Activated CD8-positive, alpha-beta T cell treated with anti-CD3 and anti-CD28 coated beads for 36 hours (primary cell): ENCODE measurements at regions of chr17 and their contacts with region 1.

Region 1: GRCh38 chr17:69567130-69567529 is 152.6 kb downstream of the MAP2K6 start:
- DNase-seq: no peak
- ATAC-seq: no peak
- H3K4me3 Mint-ChIP-seq: no peak overlapping the region
- H3K27ac Mint-ChIP-seq: no peak overlapping the region
- H3K4me1 Mint-ChIP-seq: no peaks in the 10 kb centered on the region
- H3K27me3 Mint-ChIP-seq: peaks cover 1% of the 10 kb centered on the region
- CTCF ChIP-seq: no peak

Region 2: DNA sequence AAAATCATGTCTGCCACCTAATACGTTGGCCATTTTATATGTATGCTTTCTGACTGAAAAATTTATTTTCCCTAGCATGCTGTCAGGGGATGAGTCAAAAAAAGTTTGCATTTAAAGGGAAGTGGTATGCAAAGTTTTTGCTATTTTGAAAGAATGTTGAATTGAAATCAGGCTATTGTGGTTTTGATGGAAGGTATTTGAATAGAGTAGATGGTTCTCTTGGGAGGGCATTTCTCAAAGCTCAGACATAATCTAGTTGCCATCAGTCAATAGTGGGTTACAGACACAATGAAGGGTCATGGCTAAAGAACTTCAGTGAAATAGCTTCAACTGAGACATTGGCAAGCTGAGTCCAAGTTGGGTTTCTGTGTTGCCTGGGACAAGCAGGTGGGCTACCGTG is 50.2 kb before region 1 on chr17:
- CTCF ChIA-PET with region 1: no interaction called
- POLR2A ChIA-PET with region 1: no interaction called
- intact Hi-C with region 1: no loop called
- DNase-seq: no peak
- ATAC-seq: no peak
- H3K4me3 Mint-ChIP-seq: no peak overlapping the region
- H3K27ac Mint-ChIP-seq: no peak overlapping the region
- H3K4me1 Mint-ChIP-seq: peaks cover 4% of the 10 kb centered on the region
- H3K27me3 Mint-ChIP-seq: no peaks in the 10 kb centered on the region
- CTCF ChIP-seq: no peak

Region 3: DNA sequence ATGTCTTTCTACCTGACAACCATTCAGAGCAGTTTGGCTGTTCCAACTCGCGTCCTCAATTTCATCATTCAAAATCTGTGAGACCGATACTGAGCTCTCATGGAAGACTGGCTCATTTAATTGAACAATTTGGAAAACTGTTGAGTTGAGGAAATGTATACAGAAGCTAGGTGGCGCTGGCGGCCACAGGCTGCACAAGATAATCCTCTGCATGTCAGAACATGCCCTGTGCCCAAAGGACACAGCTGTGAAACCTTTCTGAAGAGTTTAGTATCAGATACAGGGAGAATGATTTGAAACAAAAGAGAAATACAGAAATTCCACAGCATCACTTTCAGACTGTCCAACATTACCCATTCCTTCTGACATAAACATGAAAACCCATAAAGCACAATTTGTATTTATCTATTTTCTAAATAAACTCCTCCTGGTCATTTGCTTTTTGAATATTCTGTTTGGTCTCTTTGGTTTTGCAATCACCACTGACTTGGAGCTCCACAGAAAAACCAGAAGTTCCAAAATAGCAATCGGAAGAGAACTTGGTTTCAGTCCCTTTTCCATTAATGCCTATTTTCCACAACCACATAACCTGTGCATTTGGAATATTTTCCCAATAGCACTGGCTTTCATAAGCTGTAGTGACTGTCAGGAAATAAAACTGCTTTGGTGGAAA is 40.2 kb after region 1 on chr17:
- CTCF ChIA-PET with region 1: interaction called, 11 read pairs
- POLR2A ChIA-PET with region 1: no interaction called
- intact Hi-C with region 1: no loop called
- DNase-seq: peak; percentile 75
- ATAC-seq: peak; percentile 78
- H3K4me3 Mint-ChIP-seq: no peak overlapping the region
- H3K27ac Mint-ChIP-seq: peak overlapping the region; percentile 64
- H3K4me1 Mint-ChIP-seq: peaks cover 18% of the 10 kb centered on the region
- H3K27me3 Mint-ChIP-seq: peaks cover 5% of the 10 kb centered on the region
- CTCF ChIP-seq: peak; percentile 79

Region 4: DNA sequence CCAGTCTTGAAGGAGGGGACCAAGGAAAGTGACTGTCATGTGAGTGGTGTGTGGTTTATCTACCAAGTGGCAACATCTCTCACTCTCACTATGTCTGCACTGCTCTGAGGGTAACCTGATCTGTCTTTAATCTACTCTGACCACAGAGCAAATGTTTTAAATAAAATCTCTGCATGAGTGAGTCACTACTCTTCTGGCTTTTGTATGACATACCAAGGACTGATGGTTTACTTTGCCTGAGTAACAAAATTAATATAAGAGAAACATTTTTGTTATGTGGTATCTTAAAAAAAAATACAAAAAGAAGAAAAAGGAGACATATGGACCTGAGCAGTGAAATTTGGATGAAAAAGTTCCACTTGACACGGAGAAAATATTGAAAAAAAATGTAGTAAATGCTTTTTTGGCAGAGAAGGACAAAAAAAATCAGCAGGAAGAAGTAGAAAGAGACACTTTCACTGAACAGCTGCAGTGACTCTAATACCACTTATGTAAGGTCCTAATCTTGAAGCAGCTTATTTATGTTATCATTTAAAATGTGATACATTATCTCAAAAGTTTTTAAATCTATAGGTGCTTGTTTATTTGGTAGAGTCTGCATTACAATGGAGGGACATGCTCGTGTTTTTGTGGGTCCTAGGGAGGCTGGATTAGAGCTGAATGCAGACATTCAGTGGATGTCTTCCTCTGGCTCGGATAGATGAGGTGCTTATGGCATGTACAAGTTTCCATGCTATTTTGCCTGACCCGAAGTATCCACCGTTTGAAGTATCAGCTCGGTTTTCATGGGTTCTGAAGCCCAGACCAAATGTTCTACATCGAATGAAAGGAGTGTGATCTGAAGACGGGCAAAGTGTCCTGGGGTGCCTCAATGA is 88.1 kb after region 1 on chr17:
- CTCF ChIA-PET with region 1: no interaction called
- POLR2A ChIA-PET with region 1: no interaction called
- intact Hi-C with region 1: no loop called
- DNase-seq: peak; percentile 5
- ATAC-seq: peak; percentile 56
- H3K4me3 Mint-ChIP-seq: no peak overlapping the region
- H3K27ac Mint-ChIP-seq: no peak overlapping the region
- H3K4me1 Mint-ChIP-seq: no peaks in the 10 kb centered on the region
- H3K27me3 Mint-ChIP-seq: peaks cover 6% of the 10 kb centered on the region
- CTCF ChIP-seq: no peak

Region 5: GRCh38 chr17:70552230-70552981 is 985.3 kb after region 1 on chr17:
- CTCF ChIA-PET with region 1: interaction called, 5 read pairs
- POLR2A ChIA-PET with region 1: no interaction called
- intact Hi-C with region 1: loop called (anchors 10 kb)
- DNase-seq: no peak
- ATAC-seq: no peak
- H3K4me3 Mint-ChIP-seq: no peak overlapping the region
- H3K27ac Mint-ChIP-seq: no peak overlapping the region
- H3K4me1 Mint-ChIP-seq: no peaks in the 10 kb centered on the region
- H3K27me3 Mint-ChIP-seq: peaks cover 1% of the 10 kb centered on the region
- CTCF ChIP-seq: peak; percentile 48